ENCODE measurements at regions of chr6 and their contacts with region 1.

Region 1: DNA sequence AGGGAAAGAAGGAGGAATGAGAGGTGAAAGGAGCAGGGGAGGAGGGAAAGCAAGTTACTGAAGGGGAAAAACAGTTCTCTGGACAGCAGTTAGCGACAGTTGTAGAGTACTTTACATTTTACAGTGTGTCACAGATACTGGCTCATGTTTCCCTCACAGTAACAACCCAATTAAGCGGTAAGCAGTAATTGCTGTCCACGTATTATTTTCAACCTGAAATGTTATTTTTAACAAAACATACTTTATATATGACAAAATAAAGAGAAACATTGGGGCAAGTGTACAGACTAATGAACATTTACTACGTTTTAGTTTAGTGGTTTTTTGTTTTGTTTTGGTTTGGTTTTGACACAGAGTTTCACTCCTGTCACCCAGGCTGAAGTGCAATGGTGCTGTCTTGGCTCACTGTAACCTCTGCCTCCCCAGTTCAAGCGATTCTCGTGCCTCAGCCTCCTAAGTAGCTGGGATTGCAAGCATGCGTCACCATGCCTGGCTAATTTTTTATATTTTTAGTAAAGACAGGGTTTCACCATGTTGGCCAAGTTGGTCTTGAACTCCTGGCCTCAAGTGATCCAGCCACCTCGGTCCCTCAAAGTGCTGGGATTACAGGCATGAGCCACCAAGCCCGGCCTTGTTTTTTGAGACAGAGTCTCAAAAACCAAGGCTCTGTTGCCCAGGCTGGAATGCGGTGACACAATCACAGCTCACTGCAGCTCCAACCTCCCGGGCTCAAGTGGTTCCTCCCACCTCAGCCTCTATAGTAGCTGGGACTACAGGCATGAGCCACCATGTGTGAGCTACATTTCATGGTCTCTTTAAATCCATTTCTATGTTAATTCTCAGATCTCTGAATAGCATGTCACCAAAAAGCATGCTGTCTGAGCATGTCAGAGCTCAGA is 22.6 kb upstream of the BTN3A2 start:
- DNase-seq: no peak
- H3K4me3 ChIP-seq: no peak overlapping the region
- H3K4me3 Mint-ChIP-seq: peak overlapping the region; percentile 43 to 69
- H3K27ac ChIP-seq: no peak overlapping the region
- H3K27ac Mint-ChIP-seq: peak overlapping the region in 3 of 7 donors; percentile 23 to 56 (median 50)
- H3K4me1 ChIP-seq: peaks cover 0 to 5% of the 10 kb centered on the region in 2 donors
- H3K4me1 Mint-ChIP-seq: peaks cover 6% of the 10 kb centered on the region
- H3K27me3 ChIP-seq: peaks cover 2 to 3% of the 10 kb centered on the region in 2 donors
- H3K27me3 Mint-ChIP-seq: peaks cover 2 to 10% (median 10%) of the 10 kb centered on the region in 3 donors
- CTCF ChIP-seq: no peak

Region 2: GRCh38 chr6:26421259-26422144 is 79.1 kb after region 1 on chr6:
- intact Hi-C with region 1: loop called in 1 of 2 experiments (anchors 10 kb)
- DNase-seq: peak; percentile 47 to 87 (median 80)
- H3K4me3 ChIP-seq: peak overlapping the region; percentile 75 to 100 (median 100)
- H3K4me3 Mint-ChIP-seq: no peak overlapping the region
- H3K27ac ChIP-seq: peak overlapping the region; percentile 39 to 90
- H3K27ac Mint-ChIP-seq: peak overlapping the region in 1 of 7 donors; percentile 63
- H3K4me1 ChIP-seq: peaks cover 9 to 17% of the 10 kb centered on the region in 2 donors
- H3K4me1 Mint-ChIP-seq: peaks cover 35% of the 10 kb centered on the region
- H3K27me3 ChIP-seq: no peaks in the 10 kb centered on the region
- H3K27me3 Mint-ChIP-seq: peaks cover 0 to 3% (median 0%) of the 10 kb centered on the region in 3 donors
- CTCF ChIP-seq: no peak

Region 3: DNA sequence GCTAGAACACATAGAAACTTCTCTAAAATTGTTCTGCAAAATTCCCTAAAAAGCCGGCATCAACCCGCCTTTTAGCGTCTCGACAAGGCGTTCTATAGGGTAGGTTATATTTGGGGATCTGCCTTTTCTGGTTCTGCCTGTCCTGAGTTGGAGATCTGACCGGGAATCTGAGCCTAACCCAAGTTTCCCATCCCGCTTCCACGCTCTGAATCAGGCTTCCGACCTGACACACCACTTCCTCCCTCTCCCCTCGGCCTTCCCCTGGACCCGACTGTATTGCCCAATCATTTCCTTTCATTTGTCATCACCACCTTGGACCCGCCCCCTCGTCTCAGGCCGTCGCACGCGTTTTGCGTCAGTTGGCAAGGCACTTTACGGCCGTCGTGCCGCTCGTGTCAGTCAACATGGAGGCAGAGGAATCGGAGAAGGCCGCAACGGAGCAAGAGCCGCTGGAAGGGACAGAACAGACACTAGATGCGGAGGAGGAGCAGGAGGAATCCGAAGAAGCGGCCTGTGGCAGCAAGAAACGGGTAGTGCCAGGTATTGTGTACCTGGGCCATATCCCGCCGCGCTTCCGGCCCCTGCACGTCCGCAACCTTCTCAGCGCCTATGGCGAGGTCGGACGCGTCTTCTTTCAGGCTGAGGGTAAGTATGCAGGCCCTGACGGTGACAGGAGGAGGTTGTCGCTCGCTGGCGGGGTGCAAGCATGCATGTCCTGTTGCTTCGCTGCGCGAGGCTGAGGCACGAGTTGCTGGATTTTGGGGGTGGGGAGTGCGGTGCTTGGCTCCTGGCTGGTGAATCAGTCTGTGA is 254.4 kb after region 1 on chr6 and contains the start of gene ABT1:
- intact Hi-C with region 1: loop called in 1 of 2 experiments (anchors 10 kb)
- DNase-seq: peak; percentile 96 to 99 (median 99)
- H3K4me3 ChIP-seq: peak within 1 kb of the TSS; percentile 83 to 94 (median 90)
- H3K4me3 Mint-ChIP-seq: no peak within 1 kb of the TSS
- H3K27ac ChIP-seq: peak within 1 kb of the TSS; percentile 82 to 95
- H3K27ac Mint-ChIP-seq: peak within 1 kb of the TSS in 1 of 7 donors; percentile 65
- H3K4me1 ChIP-seq: peaks cover 17 to 39% of the 10 kb centered on the region in 2 donors
- H3K4me1 Mint-ChIP-seq: peaks cover 26% of the 10 kb centered on the region
- H3K27me3 ChIP-seq: peaks cover 19 to 31% of the 10 kb centered on the region in 2 donors
- H3K27me3 Mint-ChIP-seq: peaks cover 19 to 22% (median 19%) of the 10 kb centered on the region in 3 donors
- CTCF ChIP-seq: no peak
- polyA plus RNA-seq, gene ABT1: 11.6 to 40.6 (median 31.7) TPM

Measured in CD14-positive monocyte (primary cell).